ENCODE measurements at regions of chr18 and their contacts with region 1.

Region 1: GRCh38 chr18:9136315-9137155 is at the start of gene ANKRD12:
- DNase-seq: peak; percentile 98
- H3K4me3 Mint-ChIP-seq: peak within 1 kb of the TSS; percentile 94
- H3K27ac Mint-ChIP-seq: peak within 1 kb of the TSS; percentile 99
- H3K4me1 Mint-ChIP-seq: peaks cover 54% of the 10 kb centered on the region
- H3K27me3 Mint-ChIP-seq: no peaks in the 10 kb centered on the region
- total RNA-seq, gene ANKRD12: 61.3 and 62.2 TPM in 2 replicates

Region 2: DNA sequence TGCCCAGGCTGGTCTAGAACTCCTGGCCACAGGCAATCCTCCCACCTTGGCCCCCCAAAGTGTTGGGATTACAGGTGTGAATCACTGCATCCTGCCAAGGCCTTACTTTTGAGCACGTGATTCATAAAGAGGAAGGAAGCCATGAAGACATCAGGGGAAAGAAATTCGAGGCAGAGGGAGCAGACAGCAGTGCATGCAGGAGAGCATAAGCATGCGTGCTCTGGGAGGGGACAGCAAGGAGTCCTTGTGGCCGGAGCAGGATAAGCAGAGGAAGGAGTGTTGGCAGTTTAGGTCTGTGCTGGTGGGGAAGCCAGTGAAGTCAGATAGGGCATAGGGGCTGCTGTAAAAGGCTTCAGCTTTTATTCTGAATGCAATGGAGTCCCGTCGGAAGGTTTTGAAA is 927.8 kb before region 1 on chr18:
- intact Hi-C with region 1: no loop called
- DNase-seq: no peak
- H3K4me3 Mint-ChIP-seq: no peak overlapping the region
- H3K27ac Mint-ChIP-seq: no peak overlapping the region
- H3K4me1 Mint-ChIP-seq: no peaks in the 10 kb centered on the region
- H3K27me3 Mint-ChIP-seq: no peaks in the 10 kb centered on the region

Region 3: DNA sequence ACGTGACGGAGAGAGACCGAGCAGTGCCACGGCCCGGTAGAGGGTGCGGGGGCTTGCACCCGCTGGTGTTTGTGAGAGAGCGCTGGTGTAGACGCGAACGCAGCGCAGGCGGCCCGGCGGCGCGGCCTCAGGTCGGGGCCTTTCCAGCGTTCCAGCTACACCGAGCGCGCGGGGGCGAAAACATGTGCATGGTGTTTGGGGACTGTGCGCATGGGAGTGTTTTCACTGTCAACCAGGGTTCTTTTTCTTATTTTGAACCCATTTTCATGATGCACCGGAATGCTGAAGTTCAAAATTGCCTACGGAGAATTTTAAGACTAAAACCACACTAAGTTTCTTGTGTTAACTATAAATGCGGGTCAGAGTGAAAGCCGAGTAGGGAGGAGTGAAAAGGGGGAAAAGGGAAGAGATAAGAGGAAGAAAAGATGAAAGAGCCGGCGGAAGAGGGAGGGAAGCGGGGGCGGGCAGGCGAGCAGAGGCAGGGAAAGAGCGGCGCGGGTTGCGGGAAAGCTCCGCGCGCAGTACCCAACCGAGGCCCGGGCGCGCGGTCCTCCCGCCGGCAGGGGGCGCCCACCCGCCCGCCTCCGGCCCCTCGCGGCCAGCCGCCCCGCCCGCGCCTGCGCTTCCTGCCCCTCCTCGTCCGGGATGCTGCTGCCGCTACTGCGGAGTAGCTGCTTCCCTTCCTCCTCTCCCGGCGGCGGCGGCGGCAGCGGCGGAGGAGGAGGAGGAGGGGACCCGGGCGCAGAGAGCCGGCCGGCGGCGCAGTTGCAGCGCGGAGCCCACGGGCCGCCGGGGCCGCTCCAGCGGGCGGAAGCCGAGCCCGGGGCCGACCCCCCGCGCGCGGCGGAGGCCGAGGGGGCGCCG is 527.5 kb before region 1 on chr18 and contains the start of gene RAB12:
- intact Hi-C with region 1: loop called (anchors 5 kb)
- DNase-seq: peak; percentile 83
- H3K4me3 Mint-ChIP-seq: peak within 1 kb of the TSS; percentile 91
- H3K27ac Mint-ChIP-seq: peak within 1 kb of the TSS; percentile 88
- H3K4me1 Mint-ChIP-seq: peaks cover 50% of the 10 kb centered on the region
- H3K27me3 Mint-ChIP-seq: peaks cover 12% of the 10 kb centered on the region
- total RNA-seq, gene RAB12: 18.9 and 19.2 TPM in 2 replicates

Region 4: DNA sequence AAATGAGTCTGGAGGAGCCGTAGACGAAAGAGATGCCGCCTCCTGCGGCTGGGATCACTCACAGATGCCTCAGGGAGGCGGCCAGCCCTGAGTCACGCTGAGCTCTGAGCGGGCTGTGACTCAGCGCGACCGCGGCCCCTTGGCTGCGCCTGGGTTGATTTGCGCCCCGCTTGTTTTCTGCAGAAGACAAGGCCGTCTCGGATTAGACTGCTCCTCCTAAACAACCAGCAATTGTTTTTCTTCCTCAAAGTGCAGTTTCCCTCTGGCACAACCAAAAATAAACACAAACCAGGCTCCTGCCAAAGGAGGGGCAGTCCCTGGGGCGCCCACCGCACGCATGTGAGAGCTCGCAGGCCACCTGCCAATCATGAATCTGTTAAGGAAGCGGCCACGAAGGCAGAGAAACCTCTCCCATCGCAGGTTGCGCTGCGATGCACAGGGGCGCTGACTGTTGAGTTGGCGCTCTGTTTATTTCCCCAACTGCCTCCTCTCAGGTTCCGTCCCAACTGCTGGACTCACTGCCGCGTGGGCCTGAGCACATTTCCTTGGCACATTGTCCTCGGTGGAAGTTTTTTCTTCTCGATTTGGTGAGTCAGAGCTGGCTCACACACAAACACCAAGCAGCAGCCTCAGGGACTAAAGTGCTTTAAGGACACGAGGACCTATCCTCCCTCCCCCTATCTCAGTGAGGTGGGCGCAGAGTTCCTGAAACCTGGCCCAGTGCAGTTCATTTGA is 119.2 kb before region 1 on chr18:
- intact Hi-C with region 1: loop called (anchors 2 kb)
- DNase-seq: peak; percentile 40
- H3K4me3 Mint-ChIP-seq: peak overlapping the region; percentile 64
- H3K27ac Mint-ChIP-seq: peak overlapping the region; percentile 75
- H3K4me1 Mint-ChIP-seq: peaks cover 10% of the 10 kb centered on the region
- H3K27me3 Mint-ChIP-seq: peaks cover 4% of the 10 kb centered on the region

Region 5: DNA sequence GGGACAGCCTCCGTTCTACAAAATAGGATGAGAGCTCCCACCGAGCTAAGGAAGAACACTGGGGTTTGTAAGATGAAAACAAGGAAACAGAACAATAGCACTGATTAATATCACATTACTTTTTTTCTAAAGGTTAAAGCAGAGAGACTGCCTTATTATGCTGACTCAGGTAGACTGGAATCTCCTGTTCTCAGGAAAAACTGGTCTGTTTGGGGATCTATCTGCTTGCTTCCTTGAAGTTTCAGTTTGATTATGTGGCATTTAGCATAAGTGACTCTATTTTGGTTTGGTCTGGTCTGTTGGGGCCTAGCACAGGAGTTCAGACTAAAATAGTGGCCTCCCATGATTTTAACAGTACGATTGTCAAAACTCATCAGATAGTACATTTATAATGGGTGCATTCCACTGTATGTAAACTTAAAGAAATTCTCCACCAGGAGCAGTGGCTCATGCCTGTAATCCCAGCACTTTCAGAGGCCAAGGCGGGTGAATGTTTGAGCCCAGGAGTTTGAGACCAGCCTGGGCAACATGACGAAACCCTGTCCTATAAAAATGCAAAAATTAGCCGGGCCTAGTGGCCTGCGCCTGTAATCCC is 98.2 kb before region 1 on chr18:
- intact Hi-C with region 1: no loop called
- DNase-seq: no peak
- H3K4me3 Mint-ChIP-seq: no peak overlapping the region
- H3K27ac Mint-ChIP-seq: no peak overlapping the region
- H3K4me1 Mint-ChIP-seq: no peaks in the 10 kb centered on the region
- H3K27me3 Mint-ChIP-seq: no peaks in the 10 kb centered on the region

Region 6: GRCh38 chr18:9082711-9083510 is 53.6 kb before region 1 on chr18:
- intact Hi-C with region 1: loop called (anchors 1 kb)
- DNase-seq: peak; percentile 51
- H3K4me3 Mint-ChIP-seq: peak overlapping the region; percentile 75
- H3K27ac Mint-ChIP-seq: peak overlapping the region; percentile 98
- H3K4me1 Mint-ChIP-seq: peaks cover 50% of the 10 kb centered on the region
- H3K27me3 Mint-ChIP-seq: no peaks in the 10 kb centered on the region

Region 7: DNA sequence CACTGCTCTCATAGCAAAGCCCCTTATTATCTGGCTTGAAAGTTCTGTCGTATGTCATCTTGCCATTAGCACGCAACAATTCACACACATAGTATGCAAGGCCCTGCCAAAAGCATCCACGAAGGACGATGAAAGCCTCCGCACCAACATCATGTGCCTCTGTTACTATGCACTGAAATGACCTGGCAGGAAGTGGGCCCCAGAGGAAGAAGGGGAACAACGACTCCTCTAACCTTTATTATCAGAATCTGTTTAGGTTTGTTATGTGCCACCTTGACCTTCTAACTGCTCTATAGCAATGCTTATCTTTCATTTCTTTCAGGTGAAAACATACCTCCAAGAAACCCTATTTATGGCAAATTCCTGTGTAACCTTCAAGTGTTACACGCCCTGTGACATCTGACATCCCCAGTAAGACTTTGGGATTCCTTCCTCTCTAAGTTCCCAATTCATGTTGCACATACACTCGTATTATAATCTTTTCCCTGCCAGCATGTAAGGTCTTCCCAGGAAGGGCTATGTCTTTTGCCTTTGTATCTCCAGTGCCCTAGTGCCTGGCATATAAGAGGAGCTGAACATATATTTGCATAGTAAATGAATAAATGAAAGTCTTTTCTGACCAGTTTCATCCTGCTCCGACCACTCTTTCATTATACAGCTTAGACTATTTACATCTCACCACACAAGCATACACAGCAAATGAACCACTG is 41.1 kb before region 1 on chr18:
- intact Hi-C with region 1: loop called (anchors 2 kb)
- DNase-seq: peak; percentile 61
- H3K4me3 Mint-ChIP-seq: peak overlapping the region; percentile 66
- H3K27ac Mint-ChIP-seq: peak overlapping the region; percentile 100
- H3K4me1 Mint-ChIP-seq: peaks cover 71% of the 10 kb centered on the region
- H3K27me3 Mint-ChIP-seq: no peaks in the 10 kb centered on the region

Region 8: GRCh38 chr18:9102508-9103375 is 33.8 kb before region 1 on chr18 and contains the start of gene NDUFV2:
- intact Hi-C with region 1: loop called (anchors 1 kb)
- DNase-seq: peak; percentile 98
- H3K4me3 Mint-ChIP-seq: peak within 1 kb of the TSS; percentile 95
- H3K27ac Mint-ChIP-seq: peak within 1 kb of the TSS; percentile 98
- H3K4me1 Mint-ChIP-seq: peaks cover 63% of the 10 kb centered on the region
- H3K27me3 Mint-ChIP-seq: no peaks in the 10 kb centered on the region
- total RNA-seq, gene NDUFV2: 381 and 391 TPM in 2 replicates

Region 9: DNA sequence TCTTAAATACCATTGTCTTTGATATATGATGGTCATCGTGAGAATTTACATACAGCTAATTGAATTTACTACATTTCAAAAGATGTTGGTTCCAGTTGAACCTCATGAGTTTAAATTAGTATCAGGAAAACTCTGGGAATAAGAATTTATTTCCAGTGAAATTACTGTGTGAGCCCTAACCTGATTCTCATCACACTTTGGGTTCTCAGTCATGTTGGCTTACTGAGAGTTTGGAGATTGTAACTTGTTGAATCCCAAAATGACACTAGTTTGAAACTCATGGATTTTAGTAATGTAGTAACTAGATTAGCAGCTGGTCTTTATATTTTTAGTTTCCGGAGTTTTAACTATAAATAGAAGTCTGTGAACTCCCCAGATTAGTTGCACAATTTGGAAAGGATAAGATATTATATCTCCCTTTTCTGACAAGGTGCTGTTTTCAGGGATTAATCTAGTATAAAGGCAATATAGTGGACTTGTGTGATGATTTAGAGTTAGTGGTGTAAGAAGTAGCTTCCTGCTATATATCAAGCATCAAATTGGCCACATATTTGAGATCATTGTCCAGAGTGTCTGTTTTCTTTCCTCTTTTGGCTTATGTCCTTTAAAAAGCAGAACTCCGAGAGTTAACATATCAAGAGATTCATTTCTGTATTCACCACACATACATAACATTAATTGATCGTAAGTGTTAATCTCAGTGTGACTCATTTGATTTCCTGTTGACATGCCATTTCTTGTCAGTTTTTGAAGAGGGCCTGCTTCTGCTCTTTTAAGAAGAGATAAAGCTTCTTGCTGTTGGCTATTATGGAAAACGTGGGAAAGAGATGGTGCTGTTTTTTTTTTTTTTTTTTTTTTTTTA is 18.3 kb before region 1 on chr18:
- intact Hi-C with region 1: loop called (anchors 1 kb)
- DNase-seq: no peak
- H3K4me3 Mint-ChIP-seq: peak overlapping the region; percentile 64
- H3K27ac Mint-ChIP-seq: peak overlapping the region; percentile 81
- H3K4me1 Mint-ChIP-seq: peaks cover 83% of the 10 kb centered on the region
- H3K27me3 Mint-ChIP-seq: no peaks in the 10 kb centered on the region